Calu3 (cell line): ENCODE measurements at regions of chr20 and their contacts with region 1.

Region 1: GRCh38 chr20:63537525-63538203 is 488 bp upstream of the PTK6 start:
- DNase-seq: peak; percentile 100
- H3K4me3 Mint-ChIP-seq: peak overlapping the region; percentile 89
- H3K27ac Mint-ChIP-seq: peak overlapping the region; percentile 84
- H3K4me1 Mint-ChIP-seq: peaks cover 60% of the 10 kb centered on the region
- H3K27me3 Mint-ChIP-seq: no peaks in the 10 kb centered on the region
- CTCF ChIP-seq: peak; percentile 99

Region 2: DNA sequence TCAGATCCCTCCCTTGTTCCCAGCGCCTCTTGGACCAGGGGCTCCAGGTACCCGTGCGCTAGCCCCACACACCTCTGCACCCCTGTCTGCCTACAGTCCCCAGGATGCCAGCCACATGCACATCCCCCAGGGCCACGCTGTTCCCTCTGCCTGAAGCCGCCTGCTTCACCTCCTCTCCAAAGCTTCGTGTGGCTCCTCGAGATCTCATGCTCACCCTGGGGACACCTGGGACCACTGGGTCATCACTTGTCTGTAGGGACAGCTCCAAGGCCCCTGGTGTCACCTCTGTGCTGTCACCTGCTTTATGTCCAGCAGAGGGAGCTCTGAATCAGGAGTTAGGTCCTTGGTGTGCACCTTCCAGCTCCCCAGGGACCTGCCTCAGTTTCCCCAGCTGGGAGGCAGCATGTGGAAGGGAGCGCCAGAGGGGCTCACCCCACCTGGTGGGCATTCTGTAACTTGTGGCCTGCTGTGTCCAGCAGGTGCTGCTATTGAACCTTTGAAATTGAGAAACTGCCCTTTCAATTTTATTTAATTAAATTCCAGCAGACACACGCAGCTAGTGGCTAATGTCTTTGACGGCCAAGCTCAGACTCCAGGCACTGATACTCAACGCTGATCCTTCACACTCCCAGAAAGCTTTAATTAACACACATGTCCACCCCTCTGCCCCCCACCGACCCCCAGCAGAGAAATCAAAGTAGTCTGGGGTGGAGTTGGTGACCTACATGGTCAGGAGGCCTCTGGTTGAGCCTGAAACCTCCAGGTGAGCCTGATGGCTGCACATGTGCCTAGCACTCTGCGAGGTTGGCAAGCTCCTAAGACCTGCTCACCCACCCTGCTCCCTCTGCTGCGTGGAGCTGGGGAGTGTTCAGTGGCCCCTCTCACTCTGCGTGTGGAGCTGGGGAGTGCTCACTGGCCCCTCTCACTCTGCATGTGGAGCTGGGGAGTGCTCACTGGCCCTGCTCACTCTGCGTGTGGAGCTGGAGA is 314.1 kb before region 1 on chr20:
- CTCF ChIA-PET with region 1: no interaction called
- intact Hi-C with region 1: loop called (anchors 5 kb)
- DNase-seq: peak; percentile 75
- H3K4me3 Mint-ChIP-seq: no peak overlapping the region
- H3K27ac Mint-ChIP-seq: no peak overlapping the region
- H3K4me1 Mint-ChIP-seq: peaks cover 24% of the 10 kb centered on the region
- H3K27me3 Mint-ChIP-seq: peaks cover 36% of the 10 kb centered on the region
- CTCF ChIP-seq: peak; percentile 98

Region 3: GRCh38 chr20:63627129-63627750 is 89.6 kb after region 1 on chr20:
- CTCF ChIA-PET with region 1: interaction called, 7 read pairs
- intact Hi-C with region 1: loop called (anchors 2 kb)
- DNase-seq: peak; percentile 99
- H3K4me3 Mint-ChIP-seq: peak overlapping the region; percentile 76
- H3K27ac Mint-ChIP-seq: peak overlapping the region; percentile 74
- H3K4me1 Mint-ChIP-seq: peaks cover 7% of the 10 kb centered on the region
- H3K27me3 Mint-ChIP-seq: no peaks in the 10 kb centered on the region
- CTCF ChIP-seq: no peak

Region 4: GRCh38 chr20:63682384-63683139 is 144.9 kb after region 1 on chr20:
- CTCF ChIA-PET with region 1: interaction called, 25 read pairs
- intact Hi-C with region 1: no loop called
- DNase-seq: peak; percentile 99
- H3K4me3 Mint-ChIP-seq: peak overlapping the region; percentile 64
- H3K27ac Mint-ChIP-seq: peak overlapping the region; percentile 97
- H3K4me1 Mint-ChIP-seq: peaks cover 51% of the 10 kb centered on the region
- H3K27me3 Mint-ChIP-seq: no peaks in the 10 kb centered on the region
- CTCF ChIP-seq: no peak

Region 5: GRCh38 chr20:63864847-63865640 is 327.4 kb after region 1 on chr20 and contains the start of gene TPD52L2:
- CTCF ChIA-PET with region 1: interaction called, 12 read pairs
- intact Hi-C with region 1: loop called (anchors 2 kb)
- DNase-seq: peak; percentile 100
- H3K4me3 Mint-ChIP-seq: peak within 1 kb of the TSS; percentile 100
- H3K27ac Mint-ChIP-seq: peak within 1 kb of the TSS; percentile 92
- H3K4me1 Mint-ChIP-seq: peaks cover 19% of the 10 kb centered on the region
- H3K27me3 Mint-ChIP-seq: no peaks in the 10 kb centered on the region
- CTCF ChIP-seq: no peak
- total RNA-seq, gene TPD52L2: 192 and 197 TPM in 2 replicates

Region 6: DNA sequence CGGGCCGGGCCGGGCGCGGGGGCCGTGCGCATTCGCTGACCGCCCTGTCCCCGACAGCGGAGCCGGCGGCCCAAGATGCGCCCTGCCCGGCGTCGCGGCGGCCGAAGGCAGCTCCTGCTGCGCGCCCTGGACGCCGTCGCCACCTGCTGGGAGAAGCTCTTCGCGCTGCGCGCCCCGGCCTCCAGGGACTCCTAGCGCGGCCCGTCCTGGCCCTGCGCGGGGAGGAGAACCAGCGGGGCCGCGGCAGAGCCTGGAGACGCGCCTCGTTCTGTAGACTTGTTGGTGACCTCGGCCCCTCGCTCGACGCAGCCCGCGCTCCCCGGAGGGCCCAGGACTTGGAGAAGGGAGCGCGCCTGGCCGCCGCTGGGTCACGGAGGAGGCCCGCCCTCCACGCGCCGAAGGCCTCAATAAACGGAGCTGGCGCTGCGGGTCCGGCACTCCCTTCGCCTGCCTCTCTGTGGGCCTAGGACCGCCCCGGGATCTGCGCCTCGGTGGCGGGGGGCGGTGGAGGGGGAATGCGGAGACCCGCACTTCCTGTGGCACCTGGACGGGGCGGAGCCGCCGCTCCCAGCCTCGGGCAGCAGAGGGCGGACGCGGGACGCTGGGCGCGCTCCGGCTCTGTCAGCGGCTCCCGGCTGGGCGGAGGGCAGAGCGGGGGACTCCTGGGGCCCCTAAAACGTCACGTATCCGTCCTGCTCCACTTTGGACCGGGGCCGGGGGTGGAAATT is 501.1 kb after region 1 on chr20:
- CTCF ChIA-PET with region 1: interaction called, 12 read pairs
- intact Hi-C with region 1: no loop called
- DNase-seq: peak; percentile 94
- H3K4me3 Mint-ChIP-seq: peak overlapping the region; percentile 77
- H3K27ac Mint-ChIP-seq: no peak overlapping the region
- H3K4me1 Mint-ChIP-seq: peaks cover 6% of the 10 kb centered on the region
- H3K27me3 Mint-ChIP-seq: peaks cover 40% of the 10 kb centered on the region
- CTCF ChIP-seq: no peak